Left lung (tissue), 14 donors: ENCODE measurements at regions of chr19 and their contacts with region 1.

Region 1: DNA sequence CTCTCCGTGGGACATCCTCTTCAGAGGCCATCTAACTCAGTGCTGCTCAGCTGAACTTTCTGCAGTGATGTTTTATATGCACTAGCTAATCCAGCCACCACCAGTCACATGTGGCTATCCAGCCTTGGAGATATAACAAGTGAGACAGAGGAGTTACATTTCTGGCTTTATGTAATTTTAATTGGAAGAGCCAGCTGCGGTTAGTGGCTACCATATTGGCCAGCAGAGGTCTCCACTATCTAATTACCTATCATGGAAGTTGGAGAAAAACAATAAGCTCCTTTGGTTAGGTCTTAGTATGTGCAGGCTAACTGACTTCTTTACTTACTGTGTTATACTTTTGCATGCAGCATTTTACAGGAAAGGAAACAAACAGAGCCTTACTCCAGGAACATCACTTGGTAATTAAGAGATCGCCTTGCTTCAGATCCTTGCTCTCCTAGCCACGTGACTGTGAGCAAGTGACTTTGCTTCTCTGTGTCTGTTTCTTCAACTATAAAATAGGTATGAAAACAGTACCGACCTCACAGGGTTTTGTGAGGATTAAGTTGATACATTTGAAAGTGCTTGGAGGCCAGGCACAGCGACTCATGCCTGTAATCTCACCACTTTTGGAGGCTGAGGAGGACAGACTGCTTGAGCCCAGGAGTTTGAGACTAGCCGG is 1.6 kb upstream of the KLK10 start:
- DNase-seq: peak in 1 of 4 donors; percentile 40
- ATAC-seq: peak; percentile 62
- H3K4me3 ChIP-seq: no peak overlapping the region
- H3K27ac ChIP-seq: no peak overlapping the region
- H3K4me1 ChIP-seq: peaks cover 0 to 4% of the 10 kb centered on the region in 2 donors
- H3K27me3 ChIP-seq: peaks cover 37 to 96% of the 10 kb centered on the region in 2 donors
- CTCF ChIP-seq: peak; percentile 53 to 56

Region 2: GRCh38 chr19:51179256-51179655 is 158.1 kb after region 1 on chr19:
- intact Hi-C with region 1: loop called in 1 of 2 experiments (anchors 10 kb)
- DNase-seq: no peak
- ATAC-seq: no peak
- H3K4me3 ChIP-seq: no peak overlapping the region
- H3K27ac ChIP-seq: no peak overlapping the region
- H3K4me1 ChIP-seq: no peaks in the 10 kb centered on the region
- H3K27me3 ChIP-seq: peaks cover 0 to 54% of the 10 kb centered on the region in 2 donors
- CTCF ChIP-seq: no peak